ENCODE measurements at regions of chr4 and their contacts with region 1.

Region 1: GRCh38 chr4:112321776-112322684 is 24.9 kb downstream of the ALPK1 start:
- DNase-seq: peak; percentile 55
- CTCF ChIP-seq: peak; percentile 81

Region 2: DNA sequence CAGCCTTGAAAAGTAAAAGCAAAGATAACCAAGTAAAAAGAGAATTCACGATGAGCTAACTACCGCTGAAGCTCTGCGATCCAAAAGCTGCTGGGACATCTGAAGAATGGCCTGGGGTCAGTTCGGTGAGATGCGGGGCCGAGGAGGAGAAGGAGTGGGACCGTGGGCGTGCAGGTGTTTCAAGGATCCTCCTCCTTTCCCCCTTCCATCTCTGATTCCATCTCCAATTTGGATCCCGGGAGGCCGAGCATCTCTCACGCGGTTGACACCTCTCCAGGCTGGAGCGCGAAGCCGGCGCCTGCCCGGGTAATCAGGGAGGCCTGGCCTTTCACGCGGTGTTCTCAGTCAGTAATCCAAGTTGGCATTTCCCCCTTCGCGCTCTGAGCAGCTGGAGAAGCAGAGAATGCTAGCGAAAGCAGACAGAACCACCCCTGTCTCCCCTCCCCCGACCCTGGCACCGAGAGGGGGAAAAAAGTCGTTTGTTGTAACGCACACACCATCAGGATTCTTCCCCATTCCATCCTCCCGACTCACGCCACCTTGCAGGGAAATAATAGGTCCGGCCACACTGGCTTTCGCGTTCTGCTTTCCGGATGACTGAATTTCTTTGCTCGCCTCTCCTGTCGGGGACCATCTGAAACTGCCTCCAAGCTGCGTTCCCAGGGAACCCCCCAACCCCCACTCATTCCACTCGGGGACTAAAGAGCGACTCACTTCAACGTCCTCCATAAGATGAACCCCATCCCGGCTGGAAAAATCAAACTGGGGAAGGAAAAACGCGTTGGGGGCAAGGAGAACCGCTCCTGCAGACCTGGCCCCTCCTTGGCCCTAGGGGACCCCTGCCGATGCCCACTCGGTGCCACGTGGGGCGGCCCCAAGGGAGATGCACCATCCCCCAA is 187.5 kb after region 1 on chr4:
- CTCF ChIA-PET with region 1: interaction called, 51 read pairs
- POLR2A ChIA-PET with region 1: no interaction called
- DNase-seq: no peak
- CTCF ChIP-seq: no peak

Region 3: GRCh38 chr4:112552668-112553067 is 230.6 kb after region 1 on chr4:
- CTCF ChIA-PET with region 1: no interaction called
- POLR2A ChIA-PET with region 1: no interaction called
- DNase-seq: no peak
- CTCF ChIP-seq: no peak